ENCODE measurements at regions of chr3 and their contacts with region 1.

Region 1: GRCh38 chr3:156554842-156555687 is at the start of gene SSR3:
- DNase-seq: peak; percentile 99
- H3K4me3 ChIP-seq: peak within 1 kb of the TSS; percentile 99
- H3K4me3 Mint-ChIP-seq: peak within 1 kb of the TSS; percentile 88
- H3K27ac Mint-ChIP-seq: peak within 1 kb of the TSS; percentile 81
- H3K4me1 ChIP-seq: peaks cover 19% of the 10 kb centered on the region; the same call in 1 of the 2 replicates
- H3K4me1 Mint-ChIP-seq: peaks cover 22% of the 10 kb centered on the region
- H3K27me3 ChIP-seq: no peaks in the 10 kb centered on the region
- H3K27me3 Mint-ChIP-seq: no peaks in the 10 kb centered on the region
- CTCF ChIP-seq: no peak
- total RNA-seq, gene SSR3: 177 and 186 TPM in 2 replicates

Region 2: GRCh38 chr3:156059950-156060501 is 495.0 kb before region 1 on chr3:
- CTCF ChIA-PET with region 1: no interaction called
- POLR2A ChIA-PET with region 1: interaction called, 10 read pairs
- intact Hi-C with region 1: no loop called
- DNase-seq: no peak
- H3K4me3 ChIP-seq: no peak overlapping the region
- H3K4me3 Mint-ChIP-seq: no peak overlapping the region
- H3K27ac Mint-ChIP-seq: no peak overlapping the region
- H3K4me1 ChIP-seq: no peaks in the 10 kb centered on the region
- H3K4me1 Mint-ChIP-seq: no peaks in the 10 kb centered on the region
- H3K27me3 ChIP-seq: no peaks in the 10 kb centered on the region
- H3K27me3 Mint-ChIP-seq: peaks cover 27% of the 10 kb centered on the region
- CTCF ChIP-seq: no peak

Region 3: DNA sequence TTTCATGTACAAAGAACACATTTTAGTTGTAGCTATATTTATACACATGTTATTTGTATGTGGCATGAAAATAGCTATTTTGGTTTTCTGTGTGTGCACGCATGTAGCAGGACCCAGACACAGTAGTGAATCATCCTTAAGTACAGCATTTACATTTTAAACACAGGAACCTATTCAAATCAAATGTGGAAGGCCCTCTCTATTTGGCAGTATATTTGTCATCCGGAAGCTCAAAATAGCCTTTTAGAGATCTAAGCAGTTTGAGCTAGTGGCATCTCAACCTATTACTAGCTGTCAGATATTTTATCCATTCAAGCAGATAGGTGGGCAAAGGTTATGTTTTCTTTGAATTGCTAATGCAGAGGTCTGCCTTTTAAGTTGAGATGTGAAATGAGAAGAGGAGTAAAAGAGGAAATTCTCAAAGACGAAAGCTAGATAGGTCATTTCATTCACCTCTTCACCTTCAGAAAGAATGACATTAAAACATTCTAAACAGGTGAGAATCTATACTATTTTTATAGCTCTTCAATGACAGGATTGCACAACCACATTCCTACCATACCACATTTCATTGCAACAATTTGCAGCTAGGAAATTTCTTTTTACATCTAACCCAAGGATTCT is 73.0 kb after region 1 on chr3:
- CTCF ChIA-PET with region 1: interaction called, 4 read pairs
- POLR2A ChIA-PET with region 1: interaction called, 5 read pairs
- intact Hi-C with region 1: loop called (anchors 1 kb)
- DNase-seq: peak in 1 of 2 experiments; percentile 46
- H3K4me3 ChIP-seq: no peak overlapping the region
- H3K4me3 Mint-ChIP-seq: peak overlapping the region; percentile 58
- H3K27ac Mint-ChIP-seq: peak overlapping the region; percentile 79
- H3K4me1 ChIP-seq: peaks cover 54% of the 10 kb centered on the region
- H3K4me1 Mint-ChIP-seq: peaks cover 28% of the 10 kb centered on the region
- H3K27me3 ChIP-seq: no peaks in the 10 kb centered on the region
- H3K27me3 Mint-ChIP-seq: no peaks in the 10 kb centered on the region
- CTCF ChIP-seq: no peak